ENCODE measurements at regions of chr20 and their contacts with region 1.

Region 1: DNA sequence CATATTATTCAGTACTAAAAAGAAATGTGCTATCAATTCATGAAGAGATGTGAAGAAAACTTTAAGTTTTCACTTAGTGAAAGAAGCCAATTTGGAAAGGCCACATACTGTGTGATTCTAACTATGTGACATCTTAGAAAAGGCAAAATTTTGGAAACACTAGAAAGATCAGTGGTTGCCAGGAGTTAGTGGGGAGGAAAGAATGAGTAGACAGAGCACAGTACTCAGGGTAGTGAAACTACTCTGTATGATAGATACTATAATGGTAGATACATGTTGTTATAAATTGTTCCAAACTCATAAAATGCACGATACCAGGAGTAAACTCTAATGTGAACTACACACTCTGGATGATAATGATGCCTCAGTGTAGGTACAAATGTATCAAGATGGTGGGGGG is 14.2 kb downstream of the NCOA3 start:
- DNase-seq: no peak
- ATAC-seq: no peak
- H3K4me3 ChIP-seq: no peak overlapping the region
- H3K4me3 Mint-ChIP-seq: no peak overlapping the region
- H3K27ac ChIP-seq: no peak overlapping the region
- H3K27ac Mint-ChIP-seq: peak overlapping the region; percentile 27
- H3K4me1 ChIP-seq: peaks cover 12% of the 10 kb centered on the region
- H3K4me1 Mint-ChIP-seq: peaks cover 43% of the 10 kb centered on the region
- H3K27me3 ChIP-seq: no peaks in the 10 kb centered on the region
- H3K27me3 Mint-ChIP-seq: no peaks in the 10 kb centered on the region
- CTCF ChIP-seq: no peak

Region 2: GRCh38 chr20:47479506-47479905 is 36.3 kb before region 1 on chr20:
- CTCF ChIA-PET with region 1: no interaction called
- POLR2A ChIA-PET with region 1: no interaction called
- intact Hi-C with region 1: loop called in 1 of 2 experiments (anchors 5 kb)
- DNase-seq: no peak
- ATAC-seq: no peak
- H3K4me3 ChIP-seq: no peak overlapping the region
- H3K4me3 Mint-ChIP-seq: no peak overlapping the region
- H3K27ac ChIP-seq: no peak overlapping the region
- H3K27ac Mint-ChIP-seq: no peak overlapping the region
- H3K4me1 ChIP-seq: no peaks in the 10 kb centered on the region
- H3K4me1 Mint-ChIP-seq: no peaks in the 10 kb centered on the region
- H3K27me3 ChIP-seq: no peaks in the 10 kb centered on the region
- H3K27me3 Mint-ChIP-seq: no peaks in the 10 kb centered on the region
- CTCF ChIP-seq: no peak

Region 3: GRCh38 chr20:47875714-47875998 is 359.8 kb after region 1 on chr20:
- CTCF ChIA-PET with region 1: no interaction called
- POLR2A ChIA-PET with region 1: no interaction called
- intact Hi-C with region 1: no loop called
- DNase-seq: no peak
- ATAC-seq: no peak
- H3K4me3 ChIP-seq: no peak overlapping the region
- H3K4me3 Mint-ChIP-seq: no peak overlapping the region
- H3K27ac ChIP-seq: no peak overlapping the region
- H3K27ac Mint-ChIP-seq: no peak overlapping the region
- H3K4me1 ChIP-seq: no peaks in the 10 kb centered on the region
- H3K4me1 Mint-ChIP-seq: no peaks in the 10 kb centered on the region
- H3K27me3 ChIP-seq: no peaks in the 10 kb centered on the region
- H3K27me3 Mint-ChIP-seq: peaks cover 6% of the 10 kb centered on the region
- CTCF ChIP-seq: no peak

Region 4: DNA sequence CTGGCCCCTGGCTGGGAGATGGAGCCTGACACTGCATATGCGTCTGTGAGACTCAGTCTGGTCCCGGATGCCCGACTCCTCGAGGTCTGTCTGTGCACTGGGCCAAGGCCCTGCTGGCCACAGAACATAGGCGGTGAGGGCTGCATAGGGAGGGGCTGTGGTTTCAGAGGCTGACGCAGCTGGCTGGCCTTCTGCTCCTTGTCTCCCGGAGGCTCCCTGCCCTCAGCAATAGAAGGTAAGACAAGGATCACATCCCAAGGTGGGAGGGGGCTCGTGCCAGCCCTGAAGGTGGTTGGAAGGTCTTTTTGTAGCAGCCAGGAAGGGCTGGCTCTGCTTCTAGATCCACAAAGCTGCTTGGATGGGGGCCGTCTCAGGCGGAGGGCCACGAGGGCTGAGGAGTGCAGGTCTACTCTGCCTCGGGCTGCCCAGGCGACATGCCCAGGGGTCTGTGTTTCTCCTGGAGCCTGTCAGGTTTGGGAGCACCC is 509.2 kb after region 1 on chr20:
- CTCF ChIA-PET with region 1: no interaction called
- POLR2A ChIA-PET with region 1: no interaction called
- intact Hi-C with region 1: no loop called
- DNase-seq: no peak
- ATAC-seq: no peak
- H3K4me3 ChIP-seq: no peak overlapping the region
- H3K4me3 Mint-ChIP-seq: no peak overlapping the region
- H3K27ac ChIP-seq: no peak overlapping the region
- H3K27ac Mint-ChIP-seq: no peak overlapping the region
- H3K4me1 ChIP-seq: no peaks in the 10 kb centered on the region
- H3K4me1 Mint-ChIP-seq: no peaks in the 10 kb centered on the region
- H3K27me3 ChIP-seq: peaks cover 3 to 4% of the 10 kb centered on the region in 2 experiments
- H3K27me3 Mint-ChIP-seq: peaks cover 27% of the 10 kb centered on the region
- CTCF ChIP-seq: no peak